Activated T-helper 2 cell treated with anti-CD3 and anti-CD28 coated beads, Interferon-gamma antibody, Interleukin-2, Interleukin-4, amounts not matched to agents 10 μg/mL and 5 μg/mL and 100 μg/mL, durations not matched to agents 14 hours and 24 hours and 36 hours (primary cell): ENCODE measurements at regions of chr19 and their contacts with region 1.

Region 1: GRCh38 chr19:16185123-16185767 is at the start of gene FAM32A:
- DNase-seq: peak; percentile 99
- H3K4me3 Mint-ChIP-seq: peak within 1 kb of the TSS; percentile 95
- H3K27ac Mint-ChIP-seq: peak within 1 kb of the TSS; percentile 94
- H3K4me1 Mint-ChIP-seq: peaks cover 14% of the 10 kb centered on the region
- H3K27me3 Mint-ChIP-seq: no peaks in the 10 kb centered on the region
- total RNA-seq, gene FAM32A: 65.6 and 68.6 TPM in 2 replicates

Region 2: DNA sequence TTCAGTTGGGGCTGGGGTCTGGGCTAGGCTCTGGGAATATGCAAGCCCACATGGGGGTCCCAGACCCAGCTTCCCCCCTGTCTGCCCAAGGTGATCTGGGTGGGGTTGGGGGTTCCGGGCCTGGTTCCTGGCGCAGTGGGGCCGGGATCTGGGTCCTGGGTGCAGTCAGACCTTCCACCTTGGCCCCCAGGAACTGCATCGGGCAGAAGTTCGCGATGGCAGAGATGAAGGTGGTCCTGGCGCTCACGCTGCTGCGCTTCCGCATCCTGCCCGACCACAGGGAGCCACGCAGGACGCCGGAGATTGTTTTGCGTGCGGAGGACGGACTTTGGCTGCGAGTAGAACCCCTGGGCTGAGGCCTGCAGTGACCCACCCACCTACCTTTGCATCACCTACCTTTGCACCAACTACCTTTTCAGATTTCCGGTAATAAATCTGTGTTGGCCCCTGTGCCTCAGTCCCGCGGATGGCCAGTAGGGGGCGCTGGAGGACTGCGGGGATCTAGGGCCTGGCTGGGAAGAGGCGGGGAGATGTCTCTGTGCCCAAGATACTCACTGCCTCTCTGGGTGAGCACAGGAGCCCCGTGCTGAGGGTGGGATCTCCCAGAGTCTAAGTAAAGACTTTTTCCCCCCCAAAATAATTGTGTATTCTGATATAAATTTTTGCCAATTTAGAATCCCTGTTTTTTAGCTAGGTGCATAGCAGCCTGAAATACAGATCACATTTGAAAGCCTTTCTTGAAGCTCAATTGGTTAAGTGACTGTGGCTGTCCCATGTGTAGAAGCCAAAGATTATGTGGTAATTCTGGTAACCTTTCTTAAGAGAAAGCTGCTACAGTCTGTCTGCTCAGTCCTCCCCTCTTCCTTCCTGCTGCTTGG is 556.0 kb before region 1 on chr19:
- intact Hi-C with region 1: loop called (anchors 2 kb)
- DNase-seq: peak; percentile 74
- H3K4me3 Mint-ChIP-seq: no peak overlapping the region
- H3K27ac Mint-ChIP-seq: no peak overlapping the region
- H3K4me1 Mint-ChIP-seq: no peaks in the 10 kb centered on the region
- H3K27me3 Mint-ChIP-seq: peaks cover 2% of the 10 kb centered on the region

Region 3: DNA sequence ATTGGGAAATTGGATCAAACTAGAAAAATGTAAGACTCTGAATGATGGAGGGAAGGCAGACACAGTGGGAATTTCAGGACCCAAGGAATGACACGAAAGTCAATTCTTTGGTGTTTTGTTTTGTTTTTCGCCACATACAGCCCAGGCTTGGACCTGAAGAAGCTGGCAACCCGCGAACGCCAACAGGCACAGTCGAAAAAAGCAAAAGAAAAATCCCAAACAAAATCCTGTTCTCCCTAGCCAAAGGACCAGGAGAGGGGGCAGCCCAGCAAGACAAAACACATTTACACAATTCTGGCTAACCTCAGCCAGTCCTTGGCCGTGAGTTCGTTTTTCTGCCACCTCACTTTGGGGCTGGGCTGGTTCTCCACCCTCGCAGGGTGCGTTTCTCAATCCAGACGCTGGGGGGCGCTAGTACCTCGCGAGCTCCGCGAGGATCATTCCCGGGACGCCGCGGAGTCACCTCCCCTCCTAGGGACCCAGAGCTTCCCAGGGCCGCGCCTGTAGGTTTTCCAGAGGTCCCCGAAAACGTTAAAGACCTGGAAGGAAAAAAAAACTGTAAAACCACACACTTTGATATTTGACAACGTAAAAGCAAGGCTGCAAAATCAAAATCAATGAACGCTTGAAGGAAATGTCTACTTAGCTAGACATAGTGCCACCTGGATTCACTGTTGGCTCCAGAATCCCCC is 143.8 kb before region 1 on chr19:
- intact Hi-C with region 1: loop called (anchors 1 kb)
- DNase-seq: peak; percentile 65
- H3K4me3 Mint-ChIP-seq: peak overlapping the region; percentile 17
- H3K27ac Mint-ChIP-seq: no peak overlapping the region
- H3K4me1 Mint-ChIP-seq: peaks cover 8% of the 10 kb centered on the region
- H3K27me3 Mint-ChIP-seq: peaks cover 6% of the 10 kb centered on the region

Region 4: DNA sequence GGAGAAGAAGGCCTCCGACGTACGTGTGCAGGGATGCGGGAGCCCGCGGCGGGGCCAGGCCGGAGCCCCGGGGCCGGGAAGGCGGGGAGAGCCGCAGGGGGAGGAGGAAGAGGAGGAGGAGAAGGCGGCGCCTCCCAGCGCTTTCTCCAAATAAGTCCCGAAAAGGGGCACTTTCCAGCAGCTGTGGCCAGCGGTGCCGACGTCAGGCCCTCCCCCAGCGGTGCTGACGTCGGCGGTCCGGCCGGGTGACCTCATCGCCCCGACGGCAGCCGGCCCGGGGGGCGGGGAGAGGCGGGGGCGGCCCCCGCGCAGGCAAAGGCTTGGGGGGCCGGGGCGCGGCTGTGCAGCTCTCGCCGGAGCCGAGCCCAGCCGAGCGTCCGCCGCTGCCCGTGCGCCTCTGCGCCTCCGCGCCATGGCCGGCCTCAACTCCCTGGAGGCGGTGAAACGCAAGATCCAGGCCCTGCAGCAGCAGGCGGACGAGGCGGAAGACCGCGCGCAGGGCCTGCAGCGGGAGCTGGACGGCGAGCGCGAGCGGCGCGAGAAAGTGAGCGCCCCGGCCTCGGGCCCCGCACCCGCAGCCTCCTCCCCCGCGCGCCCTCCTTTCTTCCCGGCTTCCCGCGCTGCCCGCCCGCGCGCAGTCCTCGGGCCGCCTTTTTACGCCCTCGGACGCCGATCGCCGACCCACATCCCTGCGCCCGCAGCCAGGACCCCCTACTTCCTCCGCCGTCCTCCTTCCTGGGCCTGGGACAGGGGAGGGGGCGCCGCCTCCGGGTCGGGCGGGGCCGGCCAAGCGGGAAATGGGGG is 108.9 kb before region 1 on chr19 and contains the start of gene TPM4:
- intact Hi-C with region 1: loop called (anchors 1 kb)
- DNase-seq: peak; percentile 85
- H3K4me3 Mint-ChIP-seq: peak within 1 kb of the TSS; percentile 95
- H3K27ac Mint-ChIP-seq: peak within 1 kb of the TSS; percentile 96
- H3K4me1 Mint-ChIP-seq: peaks cover 50% of the 10 kb centered on the region
- H3K27me3 Mint-ChIP-seq: no peaks in the 10 kb centered on the region
- total RNA-seq, gene TPM4: 507 and 520 TPM in 2 replicates

Region 5: DNA sequence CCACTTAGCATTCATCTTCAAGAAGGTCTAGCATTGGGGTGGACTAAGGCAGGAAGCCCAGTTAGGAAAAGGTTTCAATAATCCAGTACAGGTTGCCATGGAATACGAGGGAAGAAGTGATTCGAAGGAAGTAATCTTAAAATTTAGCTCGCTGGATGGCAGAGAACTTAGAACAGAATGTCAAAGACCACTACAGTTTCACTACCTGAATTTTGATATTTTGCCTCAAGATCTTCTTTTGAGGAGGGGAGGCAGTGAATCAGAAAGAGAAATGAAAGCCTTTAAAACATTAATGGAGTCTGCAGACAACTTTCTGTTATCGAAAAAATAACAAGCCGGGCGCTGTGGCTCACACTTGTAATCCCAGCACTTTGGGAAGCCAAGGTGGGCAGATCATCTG is 80.5 kb before region 1 on chr19:
- intact Hi-C with region 1: no loop called
- DNase-seq: no peak
- H3K4me3 Mint-ChIP-seq: no peak overlapping the region
- H3K27ac Mint-ChIP-seq: peak overlapping the region; percentile 33
- H3K4me1 Mint-ChIP-seq: peaks cover 7% of the 10 kb centered on the region
- H3K27me3 Mint-ChIP-seq: no peaks in the 10 kb centered on the region

Region 6: GRCh38 chr19:16118489-16119033 is 66.7 kb before region 1 on chr19:
- intact Hi-C with region 1: loop called (anchors 2 kb)
- DNase-seq: peak; percentile 45
- H3K4me3 Mint-ChIP-seq: peak overlapping the region; percentile 72
- H3K27ac Mint-ChIP-seq: peak overlapping the region; percentile 95
- H3K4me1 Mint-ChIP-seq: peaks cover 54% of the 10 kb centered on the region
- H3K27me3 Mint-ChIP-seq: no peaks in the 10 kb centered on the region

Region 7: GRCh38 chr19:16197622-16198369 is 12.6 kb after region 1 on chr19 and contains the start of gene AP1M1:
- intact Hi-C with region 1: loop called (anchors 1 kb)
- DNase-seq: peak; percentile 99
- H3K4me3 Mint-ChIP-seq: peak within 1 kb of the TSS; percentile 97
- H3K27ac Mint-ChIP-seq: peak within 1 kb of the TSS; percentile 97
- H3K4me1 Mint-ChIP-seq: peaks cover 40% of the 10 kb centered on the region
- H3K27me3 Mint-ChIP-seq: no peaks in the 10 kb centered on the region
- total RNA-seq, gene AP1M1: 106 and 120 TPM in 2 replicates